Left cardiac atrium (tissue), 4 donors: ENCODE measurements at regions of chr20 and their contacts with region 1.

Region 1: DNA sequence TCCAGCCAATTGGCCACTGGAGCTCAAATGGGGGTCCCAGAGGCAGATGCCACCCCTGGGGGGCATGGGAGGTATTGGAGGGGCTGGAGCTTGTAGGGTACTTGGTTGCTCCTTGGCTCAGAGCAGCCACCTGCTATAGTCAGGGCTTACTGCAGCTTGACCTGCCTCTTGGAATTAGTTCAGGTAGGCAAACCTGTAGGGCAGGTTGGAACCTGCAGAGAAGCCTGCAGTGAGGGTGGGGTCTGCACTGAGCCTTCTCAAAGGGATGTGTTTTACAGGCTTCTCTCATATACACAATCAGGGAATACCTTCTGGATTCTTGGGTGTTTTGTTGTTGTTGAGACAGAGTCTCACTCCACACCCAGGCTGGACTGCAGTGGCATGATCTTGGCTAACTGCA is 94.2 kb upstream of the MYL9 start:
- DNase-seq: no peak
- ATAC-seq: no peak

Region 2: GRCh38 chr20:35680452-35681183 is 766.5 kb before region 1 on chr20:
- intact Hi-C with region 1: no loop called
- DNase-seq: no peak
- ATAC-seq: no peak

Region 3: GRCh38 chr20:36017034-36017951 is 429.8 kb before region 1 on chr20:
- intact Hi-C with region 1: no loop called
- DNase-seq: no peak
- ATAC-seq: peak; percentile 25 to 50

Region 4: GRCh38 chr20:36273414-36274180 is 173.5 kb before region 1 on chr20:
- intact Hi-C with region 1: loop called in 1 of 2 experiments (anchors 5 kb)
- DNase-seq: no peak
- ATAC-seq: peak in 1 of 2 donors; percentile 12

Region 5: DNA sequence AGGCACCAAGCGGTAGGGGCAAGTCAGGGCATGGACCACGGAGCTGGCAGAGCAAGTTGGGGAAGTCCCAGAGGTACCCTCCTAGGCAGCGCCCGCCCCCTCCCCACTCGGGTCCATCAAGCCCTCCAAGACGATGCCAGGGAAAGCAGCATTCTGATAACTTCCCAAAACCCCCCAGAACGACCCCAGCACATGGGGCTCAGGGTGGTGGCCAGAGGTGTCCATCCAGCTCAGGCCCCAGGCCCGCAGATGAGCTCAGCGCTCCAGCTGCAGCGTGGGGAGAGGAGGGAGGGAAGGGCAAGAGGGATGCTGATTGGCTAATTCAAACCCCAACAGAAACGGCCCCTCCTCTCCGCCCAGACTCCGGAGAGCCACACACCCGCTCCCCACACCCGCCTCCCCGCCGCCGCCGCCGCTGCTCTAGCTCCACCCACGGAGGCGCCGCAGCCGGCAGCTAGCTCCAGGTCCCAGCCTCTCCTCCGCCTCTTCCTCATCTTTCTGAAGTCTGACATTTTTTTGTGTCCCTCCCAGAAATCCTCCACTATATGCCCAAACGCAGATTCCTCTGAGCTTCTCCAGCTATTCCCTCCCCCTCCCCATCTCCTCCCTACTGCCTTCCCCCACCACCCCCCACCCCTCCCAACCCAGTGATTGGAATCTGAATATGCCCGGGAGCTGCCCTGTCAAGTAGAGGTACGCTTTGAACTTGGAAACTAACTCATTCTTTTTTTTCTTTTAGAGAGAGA is 388.5 kb after region 1 on chr20:
- intact Hi-C with region 1: no loop called
- DNase-seq: peak; percentile 94
- ATAC-seq: peak; percentile 90 to 96